Colonic mucosa (tissue), 4 donors: ENCODE measurements at regions of chr6 and their contacts with region 1.

Region 1: DNA sequence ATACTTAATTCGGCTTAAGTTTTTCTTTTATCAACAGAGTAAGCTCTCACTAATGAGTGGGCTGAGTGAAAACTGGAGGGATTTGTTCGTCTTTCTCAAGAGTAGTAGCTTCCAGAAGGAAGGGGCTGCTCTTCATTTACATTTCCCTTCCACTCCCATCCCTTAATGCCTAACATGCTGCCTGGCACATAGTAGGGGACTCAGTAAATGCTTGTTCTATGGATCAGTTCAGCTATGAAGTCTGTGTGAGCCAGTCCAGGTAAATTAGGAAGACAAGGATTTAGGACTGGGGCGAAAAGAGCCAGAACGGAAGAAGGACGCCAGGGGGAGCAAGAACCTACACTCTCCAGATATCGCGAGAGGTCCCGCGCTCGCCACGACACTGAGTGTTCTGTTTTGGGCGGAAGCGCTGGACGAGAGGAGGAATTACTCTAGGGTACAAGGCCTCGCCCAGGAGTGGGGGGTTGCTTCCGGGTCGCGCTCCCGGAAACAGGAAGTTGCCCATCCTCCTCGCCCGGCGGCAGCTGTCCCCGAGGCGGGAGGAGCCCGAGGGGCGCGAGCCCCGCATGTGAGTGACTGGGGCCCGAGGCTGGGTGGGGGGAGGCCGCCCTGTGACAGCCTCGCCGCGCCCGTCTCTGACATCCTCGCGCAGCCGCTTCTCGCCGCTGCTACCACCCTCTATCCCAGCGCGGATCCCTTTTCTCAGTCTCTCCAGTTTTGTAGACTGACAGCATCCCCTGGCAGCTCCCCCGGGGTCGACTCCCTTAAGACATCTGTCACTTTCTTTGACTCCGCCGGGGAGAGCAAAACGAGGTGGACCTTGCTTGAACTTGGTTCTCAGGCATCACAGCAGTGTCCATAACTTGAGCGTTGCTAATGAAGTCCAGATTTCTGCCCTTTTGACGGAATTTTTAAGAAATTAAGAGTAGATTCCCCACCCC is at the start of gene C6orf89:
- DNase-seq: peak; percentile 99
- H3K4me3 ChIP-seq: peak within 1 kb of the TSS; percentile 71
- H3K27ac ChIP-seq: peak within 1 kb of the TSS; percentile 62
- H3K4me1 ChIP-seq: no peaks in the 10 kb centered on the region
- H3K27me3 ChIP-seq: no peaks in the 10 kb centered on the region
- CTCF ChIP-seq: peak; percentile 67
- total RNA-seq, gene C6orf89: 46.3 to 49.5 TPM

Region 2: GRCh38 chr6:36839749-36840431 is 45.8 kb before region 1 on chr6:
- intact Hi-C with region 1: no loop called
- DNase-seq: no peak
- H3K4me3 ChIP-seq: peak overlapping the region; percentile 42
- H3K27ac ChIP-seq: no peak overlapping the region
- H3K4me1 ChIP-seq: no peaks in the 10 kb centered on the region
- H3K27me3 ChIP-seq: peaks cover 15% of the 10 kb centered on the region
- CTCF ChIP-seq: no peak

Region 3: DNA sequence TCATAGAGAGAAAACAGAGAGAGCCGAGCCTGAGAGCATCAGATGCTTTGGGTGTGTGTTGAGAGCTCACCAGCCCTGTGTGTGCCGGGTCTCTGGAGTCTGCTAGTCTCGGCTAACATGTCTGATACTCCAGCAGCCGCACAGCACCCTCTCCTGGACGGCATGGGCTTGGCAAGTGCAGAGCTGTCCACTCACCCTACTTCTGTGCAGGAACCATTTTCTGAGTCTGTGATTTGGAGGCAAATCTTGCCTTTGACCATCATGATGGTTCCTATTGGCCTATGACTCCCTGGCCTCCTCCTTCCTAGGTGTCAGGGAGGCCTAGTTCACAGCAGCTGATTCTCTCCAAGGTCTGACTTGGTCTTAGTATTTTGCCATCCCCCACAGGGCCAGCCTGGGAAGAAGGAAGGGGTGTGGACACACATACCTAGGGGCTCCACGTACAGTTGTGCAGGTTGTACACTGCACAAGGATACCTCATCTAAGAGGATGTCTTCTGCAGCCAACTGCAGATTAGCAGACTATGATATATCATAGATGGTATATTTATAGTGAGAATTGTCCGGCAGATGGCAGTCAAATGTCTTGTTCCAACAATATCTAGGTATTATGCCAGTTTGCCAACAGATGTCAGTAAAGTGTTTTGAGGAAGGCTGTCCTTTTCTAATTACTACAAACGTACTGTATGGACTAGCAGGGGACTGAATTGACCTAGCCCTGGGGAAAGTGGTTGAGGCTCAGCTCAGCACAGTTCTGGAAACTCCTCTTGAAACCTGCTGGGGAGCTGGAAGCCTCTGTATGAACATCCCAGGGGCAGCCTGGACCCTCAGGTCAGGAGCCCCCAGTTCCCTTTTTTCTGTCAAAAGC is 132.7 kb after region 1 on chr6:
- intact Hi-C with region 1: loop called (anchors 2 kb)
- DNase-seq: peak; percentile 92
- H3K4me3 ChIP-seq: no peak overlapping the region
- H3K27ac ChIP-seq: no peak overlapping the region
- H3K4me1 ChIP-seq: no peaks in the 10 kb centered on the region
- H3K27me3 ChIP-seq: no peaks in the 10 kb centered on the region
- CTCF ChIP-seq: peak; percentile 79